ENCODE measurements at regions of chr3 and their contacts with region 1.

Region 1: GRCh38 chr3:129399145-129399894 is 29.1 kb downstream of the EFCAB12 start:
- DNase-seq: peak; percentile 97
- H3K4me3 Mint-ChIP-seq: peak overlapping the region; percentile 88
- H3K27ac Mint-ChIP-seq: peak overlapping the region; percentile 97
- H3K4me1 Mint-ChIP-seq: peaks cover 30% of the 10 kb centered on the region
- H3K27me3 Mint-ChIP-seq: no peaks in the 10 kb centered on the region
- CTCF ChIP-seq: peak; percentile 57

Region 2: GRCh38 chr3:129413687-129414506 is 14.6 kb after region 1 on chr3:
- CTCF ChIA-PET with region 1: interaction called, 17 read pairs
- POLR2A ChIA-PET with region 1: interaction called, 8 read pairs
- intact Hi-C with region 1: no loop called
- DNase-seq: peak; percentile 37
- H3K4me3 Mint-ChIP-seq: no peak overlapping the region
- H3K27ac Mint-ChIP-seq: no peak overlapping the region
- H3K4me1 Mint-ChIP-seq: peaks cover 10% of the 10 kb centered on the region
- H3K27me3 Mint-ChIP-seq: no peaks in the 10 kb centered on the region
- CTCF ChIP-seq: no peak

Measured in MCF 10A (cell line).